Esophagus muscularis mucosa (tissue), 4 donors: ENCODE measurements at regions of chr11 and their contacts with region 1.

Region 1: DNA sequence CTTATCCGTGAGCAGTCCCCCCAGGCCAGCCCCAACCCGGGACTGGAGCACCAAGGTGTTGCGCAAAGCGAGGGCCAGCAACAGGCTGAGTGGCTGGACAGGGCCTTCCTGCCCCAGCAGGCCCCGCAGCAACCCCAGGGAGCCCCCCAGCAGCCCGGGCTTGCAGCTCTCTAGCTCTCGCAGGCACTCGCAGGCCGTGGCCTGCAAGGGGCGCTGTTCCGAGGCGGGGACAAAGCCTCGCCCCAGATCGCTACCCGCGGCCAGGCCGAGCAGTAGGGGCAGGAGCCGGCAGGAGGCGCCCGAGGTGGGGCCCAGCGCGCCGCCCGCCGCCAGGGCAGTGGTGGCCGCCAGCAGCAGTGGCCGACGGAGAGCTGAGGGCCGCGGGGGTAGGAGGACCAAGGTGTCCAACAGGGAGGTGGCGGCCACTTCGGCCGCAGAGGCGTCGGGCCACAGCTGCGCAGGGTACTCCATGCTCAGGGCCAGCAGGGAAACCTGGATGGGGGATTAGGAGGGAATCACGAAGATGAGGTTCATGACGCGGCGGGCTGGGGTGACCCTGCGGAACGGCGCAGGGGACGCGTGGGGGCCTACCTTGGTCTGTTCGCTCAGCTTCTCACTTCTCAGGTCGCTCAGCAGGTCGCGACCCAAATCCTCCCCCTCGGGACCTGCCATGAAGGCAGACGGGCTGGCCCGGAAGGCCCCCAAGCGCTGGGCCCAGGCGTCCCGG is 762 bp downstream of the AP5B1 start:
- DNase-seq: peak; percentile 94
- H3K4me3 ChIP-seq: peak overlapping the region; percentile 73 to 99 (median 92)
- H3K27ac ChIP-seq: peak overlapping the region; percentile 79 to 85 (median 81)
- H3K4me1 ChIP-seq: peaks cover 12 to 46% (median 45%) of the 10 kb centered on the region in 4 donors
- H3K27me3 ChIP-seq: peaks cover 0 to 9% (median 0%) of the 10 kb centered on the region in 4 donors
- CTCF ChIP-seq: peak; percentile 87 to 99 (median 95)
- EP300 ChIP-seq: no peak
- POLR2A ChIP-seq: no peak

Region 2: DNA sequence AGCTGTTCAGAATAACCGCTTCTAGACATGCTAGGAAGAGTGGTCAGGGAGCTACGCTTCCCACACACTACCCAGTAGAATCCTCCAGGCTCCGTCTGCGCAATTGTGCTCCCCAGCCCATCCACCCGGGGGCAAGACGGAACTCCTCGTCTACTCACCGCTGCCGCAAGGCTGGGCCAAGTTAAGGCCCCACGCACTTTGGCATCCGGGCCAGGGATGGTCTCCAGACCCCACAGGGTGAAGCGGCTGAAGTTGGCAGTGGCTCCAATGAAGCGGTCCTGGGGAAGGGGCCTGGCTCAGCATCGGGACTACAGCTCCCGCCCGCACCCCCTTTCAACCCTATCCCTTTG is 60.2 kb before region 1 on chr11:
- intact Hi-C with region 1: loop called (anchors 5 kb)
- DNase-seq: no peak
- H3K4me3 ChIP-seq: peak overlapping the region; percentile 79 to 99 (median 86)
- H3K27ac ChIP-seq: peak overlapping the region; percentile 90 to 95 (median 94)
- H3K4me1 ChIP-seq: peaks cover 14 to 43% (median 37%) of the 10 kb centered on the region in 4 donors
- H3K27me3 ChIP-seq: no peaks in the 10 kb centered on the region
- CTCF ChIP-seq: no peak
- EP300 ChIP-seq: no peak
- POLR2A ChIP-seq: no peak